ENCODE measurements at regions of chr11 and their contacts with region 1.

Region 1: DNA sequence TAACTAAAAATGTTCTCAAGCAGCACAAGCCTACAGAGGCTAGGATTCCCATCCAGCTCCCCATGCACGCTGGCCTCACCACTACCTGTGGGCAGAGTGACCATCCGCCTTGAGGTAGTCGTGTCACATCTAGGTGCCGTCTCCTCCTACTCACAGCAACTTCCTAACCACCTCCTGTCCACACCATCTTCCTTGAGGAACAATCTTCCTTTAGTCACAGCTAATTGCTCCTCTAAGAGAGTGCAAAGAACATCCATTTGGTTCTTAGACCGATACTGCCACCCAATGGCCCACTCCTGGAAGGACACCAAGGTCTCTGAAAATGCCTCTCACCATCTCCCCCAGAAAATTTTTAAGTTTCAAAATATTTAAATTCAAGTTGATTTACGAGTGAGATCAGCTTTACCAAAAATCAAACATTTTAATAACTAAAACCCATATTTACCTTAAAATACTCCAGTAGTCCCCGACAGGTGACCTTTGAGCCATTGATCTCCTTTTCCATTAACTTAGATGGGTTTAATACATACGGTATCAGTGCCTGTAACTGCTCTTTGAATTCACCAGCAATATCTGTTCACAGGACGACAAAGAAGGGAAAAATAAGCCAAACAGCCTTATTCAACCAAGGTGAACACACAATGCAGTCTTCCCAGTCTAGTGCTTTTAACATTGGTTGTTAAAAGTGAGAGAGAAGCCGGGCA is 21.7 kb upstream of the PLAAT3 start:
- DNase-seq: no peak
- H3K4me3 ChIP-seq: no peak overlapping the region
- H3K27ac ChIP-seq: peak overlapping the region in 1 of 4 donors; percentile 38
- H3K4me1 ChIP-seq: peaks cover 0 to 19% (median 12%) of the 10 kb centered on the region in 4 donors
- H3K27me3 ChIP-seq: no peaks in the 10 kb centered on the region
- CTCF ChIP-seq: peak; percentile 74 to 83 (median 77)
- EP300 ChIP-seq: no peak
- POLR2A ChIP-seq: no peak

Region 2: GRCh38 chr11:63478896-63479295 is 157.0 kb before region 1 on chr11:
- intact Hi-C with region 1: loop called (anchors 2 kb)
- DNase-seq: no peak
- H3K4me3 ChIP-seq: no peak overlapping the region
- H3K27ac ChIP-seq: peak overlapping the region in 2 of 4 donors; percentile 40 to 47
- H3K4me1 ChIP-seq: peaks cover 0 to 8% (median 4%) of the 10 kb centered on the region in 4 donors
- H3K27me3 ChIP-seq: no peaks in the 10 kb centered on the region
- CTCF ChIP-seq: peak; percentile 92 to 95 (median 95)
- EP300 ChIP-seq: no peak
- POLR2A ChIP-seq: no peak

Region 3: GRCh38 chr11:63573881-63574855 is 61.7 kb before region 1 on chr11:
- intact Hi-C with region 1: no loop called
- DNase-seq: no peak
- H3K4me3 ChIP-seq: peak overlapping the region; percentile 29 to 47 (median 43)
- H3K27ac ChIP-seq: peak overlapping the region; percentile 62 to 83 (median 70)
- H3K4me1 ChIP-seq: peaks cover 25 to 28% (median 26%) of the 10 kb centered on the region in 4 donors
- H3K27me3 ChIP-seq: no peaks in the 10 kb centered on the region
- CTCF ChIP-seq: no peak
- EP300 ChIP-seq: no peak
- POLR2A ChIP-seq: no peak

Region 4: DNA sequence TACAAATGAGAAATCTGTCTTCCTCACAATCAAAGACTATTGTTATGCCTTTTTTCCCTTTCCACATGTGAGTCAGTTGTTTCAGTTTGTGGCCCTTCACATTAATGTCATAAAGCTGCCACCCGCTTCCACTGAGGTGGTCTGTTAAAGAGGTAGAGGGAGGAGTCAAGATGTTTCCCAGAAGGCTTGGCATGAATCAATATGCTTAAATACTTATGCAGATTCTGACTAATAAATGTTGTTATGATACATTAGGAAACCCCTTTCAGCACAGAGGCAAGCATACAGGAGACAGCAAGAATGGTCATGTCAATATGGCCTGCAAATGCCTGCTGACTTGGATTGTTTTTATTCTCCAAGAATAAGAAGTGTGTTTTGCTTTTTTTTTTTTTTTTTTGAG is 51.9 kb after region 1 on chr11:
- intact Hi-C with region 1: no loop called
- DNase-seq: no peak
- H3K4me3 ChIP-seq: no peak overlapping the region
- H3K27ac ChIP-seq: peak overlapping the region in 1 of 4 donors; percentile 14
- H3K4me1 ChIP-seq: peaks cover 23 to 64% (median 63%) of the 10 kb centered on the region in 4 donors
- H3K27me3 ChIP-seq: no peaks in the 10 kb centered on the region
- CTCF ChIP-seq: no peak
- EP300 ChIP-seq: no peak
- POLR2A ChIP-seq: no peak

Region 5: GRCh38 chr11:64165849-64166635 is 530.1 kb after region 1 on chr11 and contains the start of gene MACROD1:
- intact Hi-C with region 1: no loop called
- DNase-seq: peak; percentile 95
- H3K4me3 ChIP-seq: peak within 1 kb of the TSS; percentile 66 to 99 (median 84)
- H3K27ac ChIP-seq: peak within 1 kb of the TSS; percentile 61 to 80 (median 78)
- H3K4me1 ChIP-seq: peaks cover 9 to 27% (median 22%) of the 10 kb centered on the region in 4 donors
- H3K27me3 ChIP-seq: no peaks in the 10 kb centered on the region
- CTCF ChIP-seq: no peak
- EP300 ChIP-seq: no peak
- POLR2A ChIP-seq: peak; percentile 12
- total RNA-seq, gene MACROD1: 28.8 to 70.7 (median 33.7) TPM

Measured in esophagus muscularis mucosa (tissue), 4 donors.